SK-N-SH (cell line): ENCODE measurements at regions of chr10 and their contacts with region 1.

Region 1: GRCh38 chr10:47024399-47025252 is 113.4 kb downstream of the PTPN20 start:
- DNase-seq: peak; percentile 83
- H3K4me3 ChIP-seq: no peak overlapping the region
- H3K27ac ChIP-seq: peak overlapping the region in 1 of 2 experiments; percentile 84; a peak in 2 of 4 replicates
- H3K4me1 ChIP-seq: peaks cover 0 to 46% of the 10 kb centered on the region in 2 experiments; a peak in 1 of 4 replicates
- H3K27me3 ChIP-seq: no peaks in the 10 kb centered on the region
- CTCF ChIP-seq: peak; percentile 78
- EP300 ChIP-seq: no peak
- RAD21 ChIP-seq: peak; percentile 93

Region 2: GRCh38 chr10:47038851-47039561 is 14.4 kb after region 1 on chr10:
- CTCF ChIA-PET with region 1: interaction called, 100 read pairs
- POLR2A ChIA-PET with region 1: interaction called, 23 read pairs
- DNase-seq: no peak
- H3K4me3 ChIP-seq: no peak overlapping the region
- H3K27ac ChIP-seq: peak overlapping the region in 1 of 2 experiments; percentile 100; a peak in 2 of 4 replicates
- H3K4me1 ChIP-seq: peaks cover 0 to 84% of the 10 kb centered on the region in 2 experiments; a peak in 2 of 4 replicates
- H3K27me3 ChIP-seq: peaks cover 11% of the 10 kb centered on the region; the same call in 1 of the 2 replicates
- CTCF ChIP-seq: no peak
- EP300 ChIP-seq: no peak
- RAD21 ChIP-seq: no peak

Region 3: GRCh38 chr10:47225219-47225927 is 200.7 kb after region 1 on chr10:
- CTCF ChIA-PET with region 1: interaction called, 13 read pairs
- POLR2A ChIA-PET with region 1: no interaction called
- DNase-seq: no peak
- H3K4me3 ChIP-seq: no peak overlapping the region
- H3K27ac ChIP-seq: no peak overlapping the region
- H3K4me1 ChIP-seq: peaks cover 0 to 19% of the 10 kb centered on the region in 2 experiments; a peak in 1 of 4 replicates
- H3K27me3 ChIP-seq: no peaks in the 10 kb centered on the region; the same call in 1 of the 2 replicates
- CTCF ChIP-seq: no peak
- EP300 ChIP-seq: no peak
- RAD21 ChIP-seq: no peak

Region 4: GRCh38 chr10:47287365-47287802 is 262.8 kb after region 1 on chr10:
- CTCF ChIA-PET with region 1: interaction called, 12 read pairs
- POLR2A ChIA-PET with region 1: interaction called, 5 read pairs
- DNase-seq: peak; percentile 50
- H3K4me3 ChIP-seq: no peak overlapping the region
- H3K27ac ChIP-seq: peak overlapping the region in 1 of 2 experiments; percentile 92; a peak in 2 of 4 replicates
- H3K4me1 ChIP-seq: peaks cover 0 to 54% of the 10 kb centered on the region in 2 experiments; a peak in 1 of 4 replicates
- H3K27me3 ChIP-seq: no peaks in the 10 kb centered on the region
- CTCF ChIP-seq: no peak
- EP300 ChIP-seq: peak in 1 of 2 experiments; percentile 54; a peak in 1 of 4 replicates
- RAD21 ChIP-seq: no peak

Region 5: GRCh38 chr10:47318706-47319105 is 294.1 kb after region 1 on chr10:
- CTCF ChIA-PET with region 1: interaction called, 337 read pairs
- POLR2A ChIA-PET with region 1: interaction called, 3 read pairs
- DNase-seq: no peak
- H3K4me3 ChIP-seq: no peak overlapping the region
- H3K27ac ChIP-seq: no peak overlapping the region
- H3K4me1 ChIP-seq: peaks cover 0 to 12% of the 10 kb centered on the region in 2 experiments; a peak in 1 of 4 replicates
- H3K27me3 ChIP-seq: peaks cover 6% of the 10 kb centered on the region; the same call in 1 of the 2 replicates
- CTCF ChIP-seq: no peak
- EP300 ChIP-seq: no peak
- RAD21 ChIP-seq: no peak

Region 6: DNA sequence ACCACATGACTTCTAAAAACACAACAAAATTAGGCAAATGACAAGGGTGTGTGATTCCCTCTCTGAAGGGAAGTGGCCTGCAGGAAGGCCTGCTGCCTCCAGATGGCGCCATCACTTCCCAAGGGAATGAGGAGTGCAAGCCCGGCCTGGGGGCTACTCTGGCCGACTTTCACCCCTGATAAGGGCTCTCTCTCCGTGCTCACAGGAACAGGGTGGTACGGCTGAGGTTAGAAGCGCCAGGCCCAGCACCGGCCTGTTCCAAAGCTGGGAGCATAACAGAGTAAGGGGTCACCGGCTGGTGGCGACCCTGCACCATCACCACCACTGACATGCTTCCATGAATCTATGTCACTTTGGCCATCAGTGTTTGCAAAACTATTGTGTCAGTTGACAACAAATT is 336.7 kb after region 1 on chr10:
- CTCF ChIA-PET with region 1: interaction called, 14 read pairs
- POLR2A ChIA-PET with region 1: no interaction called
- DNase-seq: peak; percentile 81
- H3K4me3 ChIP-seq: peak overlapping the region in 1 of 2 experiments; percentile 38; a peak in 1 of 4 replicates
- H3K27ac ChIP-seq: no peak overlapping the region
- H3K4me1 ChIP-seq: peaks cover 0 to 8% of the 10 kb centered on the region in 2 experiments; a peak in 1 of 4 replicates
- H3K27me3 ChIP-seq: no peaks in the 10 kb centered on the region
- CTCF ChIP-seq: peak; percentile 80
- EP300 ChIP-seq: no peak
- RAD21 ChIP-seq: peak; percentile 58